ENCODE measurements at regions of chr15 and their contacts with region 1.

Region 1: GRCh38 chr15:34038023-34038870 is 757 bp downstream of the AVEN start:
- DNase-seq: peak; percentile 60
- H3K4me3 Mint-ChIP-seq: peak overlapping the region; percentile 91
- H3K27ac Mint-ChIP-seq: peak overlapping the region; percentile 89
- H3K4me1 Mint-ChIP-seq: peaks cover 28% of the 10 kb centered on the region
- H3K27me3 Mint-ChIP-seq: peaks cover 5% of the 10 kb centered on the region

Region 2: DNA sequence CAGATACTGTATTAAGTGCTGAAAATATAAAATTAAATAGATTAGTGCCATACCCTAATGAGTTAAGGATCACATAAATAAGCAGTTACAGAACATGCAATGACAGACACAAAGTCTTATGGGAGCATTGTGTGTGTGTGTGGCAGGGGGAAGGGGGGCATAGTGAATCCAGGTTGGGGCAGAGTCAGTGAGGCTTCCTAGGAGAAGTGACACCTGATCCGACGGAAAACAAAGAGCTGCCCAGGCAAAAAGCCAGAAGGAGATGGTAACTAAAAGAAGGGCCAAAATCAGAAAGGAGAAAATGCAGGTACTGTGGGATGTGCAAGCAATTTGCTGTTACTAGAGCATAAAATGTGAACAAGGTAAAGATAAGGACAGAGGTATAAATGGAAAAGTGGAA is 150.1 kb before region 1 on chr15:
- intact Hi-C with region 1: no loop called
- DNase-seq: no peak
- H3K4me3 Mint-ChIP-seq: no peak overlapping the region
- H3K27ac Mint-ChIP-seq: no peak overlapping the region
- H3K4me1 Mint-ChIP-seq: no peaks in the 10 kb centered on the region
- H3K27me3 Mint-ChIP-seq: peaks cover 2% of the 10 kb centered on the region

Region 3: DNA sequence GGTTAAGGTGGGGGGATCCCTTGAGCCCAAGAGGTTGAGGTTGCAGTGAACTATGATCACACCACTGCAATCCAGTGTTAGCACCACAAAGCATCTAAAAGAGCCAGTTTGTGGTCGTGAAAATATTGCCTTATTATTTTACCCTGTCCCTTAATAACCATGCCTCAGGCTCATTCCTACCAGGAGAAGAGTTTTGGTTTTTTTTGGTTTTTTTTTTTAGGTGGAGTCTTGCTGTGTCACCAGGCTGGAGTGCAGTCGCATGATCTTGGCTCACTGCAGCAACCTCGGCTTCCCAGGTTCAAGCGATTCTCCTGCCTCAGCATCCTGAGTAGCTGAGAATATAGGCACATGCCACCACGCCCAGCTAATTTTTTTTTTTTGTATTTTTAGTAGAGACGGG is 18.7 kb after region 1 on chr15:
- intact Hi-C with region 1: loop called (anchors 1 kb)
- DNase-seq: no peak
- H3K4me3 Mint-ChIP-seq: no peak overlapping the region
- H3K27ac Mint-ChIP-seq: no peak overlapping the region
- H3K4me1 Mint-ChIP-seq: no peaks in the 10 kb centered on the region
- H3K27me3 Mint-ChIP-seq: peaks cover 5% of the 10 kb centered on the region

Region 4: GRCh38 chr15:34337557-34338306 is 299.5 kb after region 1 on chr15 and contains the start of gene SLC12A6:
- intact Hi-C with region 1: loop called (anchors 2 kb)
- DNase-seq: peak; percentile 90
- H3K4me3 Mint-ChIP-seq: peak within 1 kb of the TSS; percentile 97
- H3K27ac Mint-ChIP-seq: peak within 1 kb of the TSS; percentile 97
- H3K4me1 Mint-ChIP-seq: peaks cover 66% of the 10 kb centered on the region
- H3K27me3 Mint-ChIP-seq: no peaks in the 10 kb centered on the region
- total RNA-seq, gene SLC12A6: 33.2 and 36.4 TPM in 2 replicates

Region 5: DNA sequence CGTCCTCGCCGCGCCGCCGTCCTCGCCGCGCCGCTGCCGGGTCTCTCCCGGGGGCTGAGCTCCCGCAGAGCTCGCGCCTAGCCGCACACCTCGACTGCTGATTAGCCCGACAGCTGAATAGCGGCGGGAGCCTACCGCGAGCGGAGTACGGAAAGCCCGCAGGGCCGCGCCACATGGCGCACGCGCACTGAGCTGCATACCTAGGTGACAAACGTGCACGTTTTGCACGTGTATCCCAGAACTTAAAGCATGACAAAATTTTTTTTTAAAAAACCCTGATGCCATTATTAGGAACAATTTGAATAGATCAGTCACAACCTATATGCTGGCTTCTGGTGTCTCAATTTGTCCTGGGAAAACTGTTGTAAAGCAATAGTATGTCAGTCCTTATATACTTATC is 399.4 kb after region 1 on chr15 and contains the start of gene GOLGA8A:
- intact Hi-C with region 1: loop called (anchors 1 kb)
- DNase-seq: peak; percentile 80
- H3K4me3 Mint-ChIP-seq: peak within 1 kb of the TSS; percentile 91
- H3K27ac Mint-ChIP-seq: peak within 1 kb of the TSS; percentile 98
- H3K4me1 Mint-ChIP-seq: peaks cover 29% of the 10 kb centered on the region
- H3K27me3 Mint-ChIP-seq: peaks cover 14% of the 10 kb centered on the region
- total RNA-seq, gene GOLGA8A: 264 and 275 TPM in 2 replicates

Region 6: GRCh38 chr15:35545824-35546510 is 1507.7 kb after region 1 on chr15 and contains the start of gene DPH6:
- intact Hi-C with region 1: loop called (anchors 10 kb)
- DNase-seq: peak; percentile 73
- H3K4me3 Mint-ChIP-seq: peak within 1 kb of the TSS; percentile 92
- H3K27ac Mint-ChIP-seq: peak within 1 kb of the TSS; percentile 98
- H3K4me1 Mint-ChIP-seq: peaks cover 10% of the 10 kb centered on the region
- H3K27me3 Mint-ChIP-seq: peaks cover 1% of the 10 kb centered on the region
- total RNA-seq, gene DPH6: 10.7 and 13.1 TPM in 2 replicates